ENCODE measurements at regions of chr7 and their contacts with region 1.

Region 1: DNA sequence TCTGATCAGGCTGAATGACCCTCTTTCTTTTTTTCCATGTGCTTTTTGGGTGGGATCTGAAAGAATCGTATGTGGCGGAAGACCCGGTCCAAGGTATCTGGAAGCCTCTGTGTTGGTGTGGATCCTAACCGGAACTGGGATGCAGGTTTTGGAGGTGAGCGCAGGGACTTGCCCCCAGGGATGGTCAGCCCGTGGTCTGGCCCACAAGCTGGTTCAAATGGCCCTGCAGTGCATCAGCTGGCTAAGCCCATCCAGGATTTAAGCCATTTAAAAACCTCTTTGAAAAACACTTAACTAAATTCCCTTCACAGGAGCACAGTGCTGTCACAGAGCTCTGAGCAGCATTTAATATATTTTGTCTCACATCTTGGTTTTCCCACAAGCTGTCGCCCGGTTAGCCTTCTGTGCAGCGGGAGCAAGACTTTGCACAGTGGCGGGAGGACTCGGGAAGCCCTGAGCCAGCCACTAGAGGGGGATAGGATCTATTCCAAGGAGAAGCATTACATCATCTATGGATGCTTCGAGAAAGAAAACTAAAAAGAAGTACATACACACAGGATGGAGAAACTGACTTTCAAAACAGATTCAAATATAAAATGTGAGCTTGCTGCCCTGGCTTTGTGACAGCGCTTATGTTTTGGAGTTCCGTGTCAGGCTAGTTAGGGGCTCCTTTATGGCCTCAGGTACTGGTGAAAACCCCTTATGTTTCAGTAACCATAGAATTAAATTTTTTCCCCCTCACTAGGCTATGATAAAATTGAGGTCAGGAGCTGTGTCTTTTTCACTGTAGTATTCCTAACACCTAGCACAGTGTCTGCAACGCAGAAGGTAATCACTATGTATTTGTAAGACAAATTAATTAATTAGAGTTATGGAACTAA is 11.3 kb downstream of the CPA2 start:
- DNase-seq: peak; percentile 25
- ATAC-seq: peak; percentile 90
- H3K4me3 ChIP-seq: no peak overlapping the region
- H3K27ac ChIP-seq: no peak overlapping the region
- H3K4me1 ChIP-seq: no peaks in the 10 kb centered on the region
- H3K27me3 ChIP-seq: peaks cover 1 to 13% of the 10 kb centered on the region in 2 experiments; a peak in 1 of 5 replicates
- CTCF ChIP-seq: peak; percentile 74
- EP300 ChIP-seq: no peak
- POLR2A ChIP-seq: no peak
- RAD21 ChIP-seq: no peak

Region 2: DNA sequence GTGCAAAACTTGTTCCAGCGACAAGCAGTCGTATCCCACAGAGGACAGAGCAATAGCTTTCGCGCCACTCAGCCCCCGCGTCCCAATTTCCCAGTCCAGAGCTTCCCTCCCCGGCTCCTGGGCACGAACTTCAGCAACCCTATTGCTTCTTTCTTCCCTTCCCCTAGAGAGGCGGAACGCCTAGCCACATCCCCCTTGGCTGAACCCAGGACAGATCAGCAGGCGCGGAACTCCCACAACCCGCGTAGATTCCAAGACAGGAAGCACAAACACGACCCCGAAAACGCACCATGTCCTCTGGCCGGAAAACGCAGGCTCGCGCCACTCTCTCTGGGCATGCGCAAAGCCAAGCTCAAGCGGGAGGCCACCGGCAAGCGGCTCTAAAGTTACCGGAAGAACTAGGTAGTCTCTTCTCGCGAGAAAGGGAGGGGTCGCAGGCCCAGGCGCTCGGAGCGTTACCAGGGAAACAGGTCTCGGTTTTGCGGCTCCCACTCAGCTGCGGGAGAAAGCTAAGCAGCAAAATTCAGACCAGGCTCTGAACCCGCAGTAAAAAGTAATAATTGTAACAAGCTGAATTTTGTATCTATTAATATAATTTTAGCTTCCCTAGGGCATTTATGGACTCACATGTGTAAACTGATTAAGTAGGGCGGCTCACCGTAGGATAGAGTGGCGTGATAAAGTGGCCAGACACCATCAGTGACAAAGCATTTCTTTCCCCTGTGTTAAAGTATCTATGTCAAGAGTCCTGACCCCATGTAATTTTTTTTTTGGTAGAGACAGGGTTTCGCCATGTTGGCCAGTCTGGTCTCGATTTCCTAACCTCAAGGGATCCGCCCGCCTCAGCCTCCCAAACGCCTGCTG is 72.7 kb before region 1 on chr7 and contains the start of gene TMEM209:
- CTCF ChIA-PET with region 1: no interaction called
- POLR2A ChIA-PET with region 1: no interaction called
- in situ Hi-C with region 1: no loop called
- intact Hi-C with region 1: no loop called
- DNase-seq: peak; percentile 96
- ATAC-seq: peak; percentile 96
- H3K4me3 ChIP-seq: peak within 1 kb of the TSS; percentile 83 to 94 (median 92)
- H3K27ac ChIP-seq: peak within 1 kb of the TSS; percentile 97
- H3K4me1 ChIP-seq: peaks cover 25% of the 10 kb centered on the region
- H3K27me3 ChIP-seq: no peaks in the 10 kb centered on the region; a peak in 1 of 5 replicates
- CTCF ChIP-seq: no peak
- EP300 ChIP-seq: peak in 1 of 2 experiments; percentile 15; a peak in 1 of 4 replicates
- POLR2A ChIP-seq: peak; percentile 92 to 95
- RAD21 ChIP-seq: no peak
- total RNA-seq, gene TMEM209: 8.8 and 14.5 TPM in 2 replicates

Region 3: DNA sequence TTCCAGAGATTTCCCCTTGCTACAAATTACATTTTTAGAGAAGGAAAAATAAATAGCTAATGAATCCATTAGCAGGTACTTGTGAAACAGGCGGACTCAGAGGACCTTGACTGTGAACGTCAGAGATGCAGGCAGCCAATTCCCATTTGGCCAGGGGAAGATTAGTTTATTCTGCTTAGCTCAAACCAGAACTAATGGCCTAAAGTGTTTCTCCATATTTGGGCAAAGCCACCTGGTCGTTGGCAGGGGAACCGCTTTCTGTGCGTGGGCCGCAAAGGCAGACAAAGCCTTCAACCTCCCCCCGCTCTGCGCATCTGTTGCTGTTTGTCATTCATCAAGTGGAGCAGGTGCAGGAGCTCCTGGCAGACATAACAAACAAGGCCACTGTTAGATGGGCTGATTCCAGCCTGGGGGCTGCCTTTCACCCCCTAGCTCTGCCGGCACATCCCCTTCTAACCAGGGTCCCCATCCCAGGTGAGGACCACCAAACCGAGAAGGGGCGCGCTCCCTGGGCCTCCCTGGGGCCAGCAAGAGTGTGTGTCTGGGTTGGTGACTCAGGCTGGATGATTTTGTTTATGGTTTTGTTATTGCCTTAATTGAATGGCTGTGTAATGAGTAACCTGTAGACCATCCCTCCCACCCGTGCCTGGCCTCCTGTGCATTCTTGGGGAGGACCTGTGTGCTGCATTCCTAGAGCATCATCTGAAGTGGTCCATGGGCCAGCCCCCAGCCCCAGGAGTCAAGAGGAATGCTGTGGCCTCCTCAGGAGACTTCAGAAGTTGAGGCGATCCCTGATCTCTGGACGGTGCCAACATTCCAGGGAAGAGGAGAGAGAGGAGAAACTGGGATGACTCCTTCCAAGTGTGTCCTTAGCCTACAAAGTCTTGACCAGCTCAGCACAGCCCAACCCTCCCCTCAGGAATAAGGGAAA is 87.8 kb after region 1 on chr7:
- CTCF ChIA-PET with region 1: no interaction called
- POLR2A ChIA-PET with region 1: no interaction called
- in situ Hi-C with region 1: no loop called
- intact Hi-C with region 1: no loop called
- DNase-seq: no peak
- ATAC-seq: no peak
- H3K4me3 ChIP-seq: no peak overlapping the region
- H3K27ac ChIP-seq: no peak overlapping the region
- H3K4me1 ChIP-seq: peaks cover 65% of the 10 kb centered on the region
- H3K27me3 ChIP-seq: peaks cover 1 to 24% of the 10 kb centered on the region in 2 experiments; a peak in 4 of 5 replicates
- CTCF ChIP-seq: no peak
- EP300 ChIP-seq: no peak
- POLR2A ChIP-seq: no peak
- RAD21 ChIP-seq: no peak

Region 4: DNA sequence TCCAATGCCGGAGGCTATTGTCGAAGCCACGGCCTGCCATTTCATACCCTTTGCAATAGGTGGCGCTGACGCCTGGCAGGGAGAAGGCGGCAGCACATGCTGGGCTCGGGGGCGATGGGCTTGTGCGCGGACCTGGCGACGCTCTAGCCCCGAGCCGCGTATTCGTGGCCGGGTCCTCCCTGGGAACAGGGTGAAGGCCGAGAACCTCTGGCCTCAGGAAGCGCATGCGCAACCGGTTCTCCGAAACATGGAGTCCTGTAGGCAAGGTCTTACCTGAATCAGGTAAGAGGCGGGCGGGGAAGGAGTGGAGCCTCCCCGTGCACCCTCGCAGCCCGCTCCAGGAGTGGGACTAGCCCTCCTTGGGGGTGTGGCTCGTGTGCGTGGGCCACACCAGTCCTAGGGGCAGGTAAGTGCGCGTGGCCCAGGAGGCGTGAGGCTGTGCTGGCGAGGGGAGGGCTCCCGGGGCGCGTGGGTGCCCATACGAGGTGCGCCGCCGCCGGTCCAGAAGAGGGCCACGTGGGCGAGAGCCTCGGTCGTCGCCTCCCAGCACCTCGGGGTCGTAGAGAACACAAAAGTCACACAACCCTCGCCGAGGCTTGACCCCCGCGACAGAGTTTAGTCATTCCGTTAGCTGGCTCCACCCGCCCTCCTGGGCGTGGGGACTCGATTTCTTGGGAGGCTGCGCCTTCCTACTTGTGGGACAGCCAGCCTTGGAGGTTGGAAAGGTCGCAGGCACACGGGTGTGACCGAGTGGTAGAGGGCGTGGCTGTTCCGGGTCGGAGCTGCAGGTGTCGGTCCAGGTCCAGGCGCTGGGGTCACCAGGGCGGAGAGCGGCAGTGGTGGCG is 208.3 kb after region 1 on chr7:
- CTCF ChIA-PET with region 1: no interaction called
- POLR2A ChIA-PET with region 1: no interaction called
- in situ Hi-C with region 1: no loop called
- intact Hi-C with region 1: loop called (anchors 10 kb)
- DNase-seq: peak; percentile 78
- ATAC-seq: peak; percentile 97
- H3K4me3 ChIP-seq: peak overlapping the region; percentile 33 to 74 (median 69)
- H3K27ac ChIP-seq: peak overlapping the region; percentile 41
- H3K4me1 ChIP-seq: peaks cover 10% of the 10 kb centered on the region
- H3K27me3 ChIP-seq: no peaks in the 10 kb centered on the region; a peak in 1 of 5 replicates
- CTCF ChIP-seq: peak; percentile 89
- EP300 ChIP-seq: no peak
- POLR2A ChIP-seq: peak in 1 of 2 experiments; percentile 66; a peak in 2 of 4 replicates
- RAD21 ChIP-seq: peak; percentile 69; the same call in 1 of the 2 replicates

Measured in HepG2 (cell line).